Ascending aorta (tissue), 2 donors: ENCODE measurements at regions of chr17 and their contacts with region 1.

Region 1: DNA sequence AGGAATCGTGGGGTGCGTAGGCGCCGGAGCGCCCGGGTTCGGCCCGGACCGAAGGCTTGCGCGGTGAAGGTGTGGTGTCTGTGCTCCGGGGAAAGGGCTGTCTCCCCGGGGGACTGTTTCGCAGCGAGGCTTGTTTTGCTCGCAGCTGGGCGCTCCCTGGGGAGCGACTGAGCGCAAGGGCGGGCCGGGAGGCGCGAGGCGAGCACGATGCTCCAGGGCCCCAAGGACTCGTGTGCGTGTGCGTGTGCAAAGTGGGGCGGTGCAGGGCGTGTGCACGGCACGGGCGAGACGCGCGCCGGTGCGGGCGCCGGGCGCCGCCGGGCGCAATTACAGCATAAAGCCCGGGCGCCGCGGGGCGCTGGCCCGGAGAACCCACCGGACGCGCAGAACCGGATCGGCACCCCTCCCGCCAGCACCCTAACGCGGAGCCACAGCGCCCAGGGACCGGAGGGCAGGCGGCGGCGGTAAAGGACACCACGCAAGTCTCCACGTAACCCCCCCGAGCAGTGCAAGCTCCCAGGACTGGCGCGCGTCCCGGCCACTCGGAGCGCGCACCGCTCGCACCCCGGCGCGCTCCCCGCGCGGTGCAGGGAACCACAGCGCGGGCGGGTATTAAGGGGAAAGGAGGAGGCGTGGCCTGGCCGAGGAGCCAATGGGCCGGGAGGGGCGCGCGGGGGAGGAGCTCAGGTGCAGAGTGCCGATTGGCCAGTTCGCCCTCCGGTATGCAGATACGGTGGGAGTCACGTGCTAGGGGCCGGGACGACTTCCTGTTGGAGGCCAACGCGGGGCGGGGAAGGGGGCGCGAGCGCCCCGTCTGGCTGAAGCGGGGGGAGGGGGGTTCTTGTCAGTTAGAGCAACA is at the start of gene TNRC6C:
- DNase-seq: peak; percentile 99 to 100
- H3K4me3 ChIP-seq: peak within 1 kb of the TSS; percentile 54 to 81
- H3K27ac ChIP-seq: peak within 1 kb of the TSS; percentile 77 to 78
- H3K4me1 ChIP-seq: peaks cover 0 to 17% of the 10 kb centered on the region in 2 donors
- H3K27me3 ChIP-seq: no peaks in the 10 kb centered on the region
- CTCF ChIP-seq: peak in 1 of 3 experiments; percentile 16
- total RNA-seq, gene TNRC6C: 25.8 TPM

Region 2: DNA sequence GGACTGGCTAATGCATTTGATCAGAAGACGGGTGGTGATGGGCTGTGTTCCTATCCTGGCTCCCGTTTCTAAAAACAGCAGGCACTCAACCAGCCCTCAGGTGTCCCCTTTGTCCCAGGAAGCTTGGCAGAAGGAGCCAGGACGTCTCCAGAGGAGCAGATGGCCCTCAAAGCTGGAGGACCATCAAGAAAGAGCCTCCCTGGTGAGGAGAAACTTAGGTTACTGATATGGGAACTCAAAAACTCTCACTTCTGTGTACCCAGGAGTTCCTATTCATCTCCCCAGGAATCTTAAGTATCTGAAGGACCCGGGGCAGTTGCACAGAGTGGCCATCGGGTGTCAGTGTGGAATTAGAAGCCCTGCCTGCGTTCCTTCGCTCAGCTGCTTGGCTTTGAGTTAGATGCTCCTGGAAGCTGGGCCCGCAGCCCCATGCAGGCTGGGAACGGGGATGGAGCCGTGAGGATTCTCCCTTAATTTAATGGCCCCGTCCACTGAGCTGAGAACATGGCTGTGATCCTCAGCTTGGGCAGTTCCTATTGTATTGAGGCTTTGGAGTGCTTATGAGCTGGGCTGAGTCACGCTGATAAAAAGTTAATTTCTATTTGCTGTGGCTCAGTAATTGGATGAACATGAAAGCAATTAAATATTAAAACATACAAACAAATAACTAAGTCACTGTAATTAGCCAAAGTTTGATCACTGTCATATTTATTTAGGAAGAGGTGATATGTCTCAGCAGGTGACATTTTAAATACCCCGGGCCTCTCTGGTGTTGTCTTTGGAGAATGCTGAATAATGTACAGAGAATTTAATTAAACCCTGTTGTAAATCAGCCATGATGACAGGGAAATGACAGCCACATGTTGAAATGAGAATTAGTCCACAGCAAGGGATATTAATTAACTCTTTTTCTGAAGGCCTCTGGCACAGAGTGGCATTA is 415.3 kb before region 1 on chr17:
- intact Hi-C with region 1: loop called (anchors 2 kb)
- DNase-seq: peak; percentile 22 to 91
- H3K4me3 ChIP-seq: no peak overlapping the region
- H3K27ac ChIP-seq: peak overlapping the region in 1 of 2 donors; percentile 48
- H3K4me1 ChIP-seq: peaks cover 4 to 10% of the 10 kb centered on the region in 2 donors
- H3K27me3 ChIP-seq: no peaks in the 10 kb centered on the region
- CTCF ChIP-seq: peak; percentile 87 to 93 (median 93)

Region 3: GRCh38 chr17:77734341-77735080 is 223.6 kb before region 1 on chr17:
- intact Hi-C with region 1: loop called (anchors 2 kb)
- DNase-seq: peak; percentile 45 to 94
- H3K4me3 ChIP-seq: peak overlapping the region in 1 of 2 donors; percentile 47
- H3K27ac ChIP-seq: peak overlapping the region; percentile 85 to 87
- H3K4me1 ChIP-seq: peaks cover 21 to 44% of the 10 kb centered on the region in 2 donors
- H3K27me3 ChIP-seq: no peaks in the 10 kb centered on the region
- CTCF ChIP-seq: peak in 1 of 3 experiments; percentile 29

Region 4: GRCh38 chr17:77887464-77888241 is 70.4 kb before region 1 on chr17:
- intact Hi-C with region 1: loop called (anchors 1 kb)
- DNase-seq: peak; percentile 80 to 97
- H3K4me3 ChIP-seq: peak overlapping the region; percentile 54 to 68
- H3K27ac ChIP-seq: peak overlapping the region; percentile 80 to 84
- H3K4me1 ChIP-seq: peaks cover 0 to 12% of the 10 kb centered on the region in 2 donors
- H3K27me3 ChIP-seq: no peaks in the 10 kb centered on the region
- CTCF ChIP-seq: no peak

Region 5: DNA sequence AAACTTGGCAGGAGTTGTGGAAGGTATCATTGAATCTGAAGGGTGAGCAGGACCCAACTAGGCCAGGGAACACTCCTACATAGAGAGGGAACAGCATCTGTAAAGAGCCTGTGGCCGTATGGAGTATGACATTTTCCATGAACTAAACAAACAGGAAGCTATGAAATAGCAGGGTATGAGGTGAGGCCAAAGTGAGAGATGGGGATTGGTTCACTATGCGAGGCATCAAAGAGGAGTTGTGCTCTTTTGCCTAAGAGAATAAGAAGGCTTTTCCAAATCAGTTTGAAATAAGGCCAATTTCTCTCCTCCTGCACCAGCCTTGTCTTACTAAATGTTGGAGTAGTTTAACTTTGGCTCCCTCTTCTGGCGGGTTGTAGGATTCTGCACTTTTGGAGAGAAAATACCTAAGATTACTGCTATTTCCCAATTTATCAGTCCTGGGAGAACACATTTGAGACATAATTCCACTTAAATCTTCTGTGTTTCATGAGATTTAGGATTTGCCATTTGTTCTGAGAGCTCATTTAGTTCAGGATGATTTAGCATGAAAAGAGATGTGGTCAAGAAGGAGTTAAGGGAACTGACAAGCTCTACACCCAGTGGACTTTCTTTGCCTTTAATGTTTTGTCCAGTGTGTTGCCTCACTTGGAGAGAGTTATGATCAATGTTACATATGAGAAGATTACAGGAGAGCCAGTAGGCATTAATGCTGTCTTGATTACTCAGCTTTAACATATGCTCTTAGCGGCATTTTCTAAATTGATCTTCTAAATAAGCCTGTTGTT is 55.8 kb after region 1 on chr17:
- intact Hi-C with region 1: loop called (anchors 2 kb)
- DNase-seq: peak in 1 of 2 donors; percentile 83
- H3K4me3 ChIP-seq: no peak overlapping the region
- H3K27ac ChIP-seq: no peak overlapping the region
- H3K4me1 ChIP-seq: peaks cover 0 to 5% of the 10 kb centered on the region in 2 donors
- H3K27me3 ChIP-seq: no peaks in the 10 kb centered on the region
- CTCF ChIP-seq: peak; percentile 64 to 80 (median 66)

Region 6: GRCh38 chr17:78154903-78155811 is 197.1 kb after region 1 on chr17:
- intact Hi-C with region 1: no loop called
- DNase-seq: no peak
- H3K4me3 ChIP-seq: no peak overlapping the region
- H3K27ac ChIP-seq: no peak overlapping the region
- H3K4me1 ChIP-seq: no peaks in the 10 kb centered on the region
- H3K27me3 ChIP-seq: no peaks in the 10 kb centered on the region
- CTCF ChIP-seq: no peak